Caco-2 (cell line): ENCODE measurements at regions of chr5 and their contacts with region 1.

Region 1: DNA sequence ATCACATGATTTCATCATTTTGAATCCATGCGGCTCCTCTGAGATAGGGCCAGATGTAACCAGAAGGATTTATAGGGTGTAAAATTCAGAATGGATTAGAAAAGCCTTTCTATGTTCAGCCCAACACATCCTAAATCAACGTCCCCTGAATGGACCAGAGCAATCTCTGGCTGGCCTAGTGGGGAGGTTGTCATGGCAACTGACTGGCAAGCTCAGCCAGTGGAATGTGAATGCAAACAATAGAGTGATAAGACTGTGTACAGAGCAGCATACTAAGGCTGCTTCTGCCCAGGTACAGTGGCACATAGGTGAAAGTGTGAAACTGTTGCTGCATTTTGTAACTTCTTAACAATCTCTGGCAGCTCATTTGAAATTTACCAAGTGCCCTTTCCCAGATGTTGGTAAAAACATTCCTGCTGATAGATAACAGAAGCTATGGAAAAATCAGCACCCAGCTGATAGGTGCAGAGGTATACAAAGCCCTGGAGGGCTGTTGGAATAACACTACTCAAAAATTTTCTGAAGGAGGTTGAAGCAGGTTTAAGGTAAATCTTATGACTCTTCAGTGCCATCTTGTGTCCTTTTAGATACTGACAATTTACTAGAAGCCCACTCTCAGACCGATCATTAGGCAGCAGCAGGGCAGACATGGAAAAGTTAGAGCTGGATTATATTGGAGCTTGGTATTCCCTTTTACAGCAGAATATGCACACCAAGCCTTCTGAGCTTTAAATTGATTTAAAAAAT is 267.2 kb downstream of the RAB3C start:
- DNase-seq: peak; percentile 92 to 95
- H3K4me3 ChIP-seq: no peak overlapping the region
- H3K4me3 Mint-ChIP-seq: peak overlapping the region; percentile 13
- H3K27ac Mint-ChIP-seq: peak overlapping the region; percentile 43
- H3K4me1 ChIP-seq: peaks cover 21% of the 10 kb centered on the region
- H3K4me1 Mint-ChIP-seq: no peaks in the 10 kb centered on the region
- H3K27me3 ChIP-seq: no peaks in the 10 kb centered on the region
- H3K27me3 Mint-ChIP-seq: no peaks in the 10 kb centered on the region
- CTCF ChIP-seq: peak; percentile 47 to 72

Region 2: DNA sequence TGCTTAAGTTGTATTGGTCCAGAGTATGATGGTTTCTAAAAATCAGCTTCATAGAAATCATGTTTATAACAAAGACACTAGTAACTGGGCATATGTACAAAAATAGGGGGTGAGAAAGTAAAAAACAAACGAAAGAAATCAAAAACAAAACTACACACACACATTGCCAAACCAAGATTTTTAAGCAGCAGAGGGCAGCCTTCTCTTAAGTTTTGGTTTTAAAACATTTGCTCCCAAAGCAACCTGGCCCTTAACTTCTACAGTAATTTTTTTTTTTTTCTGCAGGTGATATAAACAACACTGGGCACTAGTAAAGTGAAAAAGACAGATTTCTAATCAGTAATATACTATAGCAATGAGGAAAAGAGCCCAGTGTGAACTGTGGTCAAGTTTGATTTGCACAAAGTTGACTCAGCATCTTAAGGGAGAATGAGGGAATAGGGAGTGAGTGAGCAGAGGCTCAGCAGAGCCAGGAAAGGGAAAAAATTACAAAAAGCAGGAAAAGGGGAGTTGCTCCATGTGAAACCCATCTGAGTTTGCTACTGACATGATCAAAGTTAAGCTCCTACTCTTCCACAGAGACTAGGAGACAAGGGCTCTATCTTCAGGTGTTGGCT is 372.2 kb before region 1 on chr5:
- CTCF ChIA-PET with region 1: interaction called, 7 read pairs
- POLR2A ChIA-PET with region 1: no interaction called
- intact Hi-C with region 1: loop called (anchors 1 kb)
- DNase-seq: peak in 1 of 2 experiments; percentile 24
- H3K4me3 ChIP-seq: no peak overlapping the region
- H3K4me3 Mint-ChIP-seq: no peak overlapping the region
- H3K27ac Mint-ChIP-seq: no peak overlapping the region
- H3K4me1 ChIP-seq: no peaks in the 10 kb centered on the region
- H3K4me1 Mint-ChIP-seq: no peaks in the 10 kb centered on the region
- H3K27me3 ChIP-seq: no peaks in the 10 kb centered on the region
- H3K27me3 Mint-ChIP-seq: no peaks in the 10 kb centered on the region
- CTCF ChIP-seq: peak; percentile 18 to 32

Region 3: DNA sequence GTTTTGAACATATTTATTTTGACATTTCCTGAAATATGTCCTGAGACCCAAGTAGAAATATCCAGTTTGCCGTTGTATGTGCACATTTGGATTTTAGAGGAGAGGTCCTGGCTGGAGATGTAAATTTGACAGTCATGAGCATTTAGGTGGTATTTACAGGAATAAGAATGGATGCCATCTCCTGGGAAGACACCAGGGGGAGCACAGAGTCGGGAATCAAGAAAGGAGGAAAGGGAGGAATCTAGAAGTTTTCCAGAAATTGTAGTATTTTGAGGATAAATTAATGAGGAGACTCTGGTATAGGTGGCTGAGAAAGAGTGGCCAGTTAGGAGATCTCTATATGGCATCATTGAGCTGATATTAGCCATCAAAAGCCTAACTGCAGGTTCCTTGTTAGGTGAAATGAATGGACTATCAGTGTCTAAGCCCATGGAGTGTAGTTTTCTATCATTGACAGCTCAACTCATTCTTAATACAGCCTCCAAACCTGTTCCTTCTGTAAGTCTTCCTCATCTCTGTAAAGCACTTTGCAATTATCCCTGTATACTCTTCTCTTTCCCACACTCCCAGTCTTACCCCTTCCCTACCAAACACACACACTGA is 351.7 kb before region 1 on chr5:
- CTCF ChIA-PET with region 1: interaction called, 24 read pairs
- POLR2A ChIA-PET with region 1: no interaction called
- intact Hi-C with region 1: loop called (anchors 1 kb)
- DNase-seq: peak in 1 of 2 experiments; percentile 64
- H3K4me3 ChIP-seq: no peak overlapping the region
- H3K4me3 Mint-ChIP-seq: no peak overlapping the region
- H3K27ac Mint-ChIP-seq: no peak overlapping the region
- H3K4me1 ChIP-seq: peaks cover 20% of the 10 kb centered on the region
- H3K4me1 Mint-ChIP-seq: peaks cover 36% of the 10 kb centered on the region
- H3K27me3 ChIP-seq: no peaks in the 10 kb centered on the region
- H3K27me3 Mint-ChIP-seq: no peaks in the 10 kb centered on the region
- CTCF ChIP-seq: peak; percentile 76 to 80

Region 4: GRCh38 chr5:58582803-58583491 is 267.1 kb before region 1 on chr5 and contains the start of gene RAB3C:
- CTCF ChIA-PET with region 1: interaction called, 3 read pairs
- POLR2A ChIA-PET with region 1: no interaction called
- intact Hi-C with region 1: loop called (anchors 1 kb)
- DNase-seq: peak; percentile 93 to 94
- H3K4me3 ChIP-seq: peak within 1 kb of the TSS; percentile 51
- H3K4me3 Mint-ChIP-seq: peak within 1 kb of the TSS; percentile 94
- H3K27ac Mint-ChIP-seq: no peak within 1 kb of the TSS
- H3K4me1 ChIP-seq: no peaks in the 10 kb centered on the region
- H3K4me1 Mint-ChIP-seq: peaks cover 6% of the 10 kb centered on the region
- H3K27me3 ChIP-seq: no peaks in the 10 kb centered on the region; the same call in 1 of the 2 replicates
- H3K27me3 Mint-ChIP-seq: peaks cover 6% of the 10 kb centered on the region
- CTCF ChIP-seq: no peak
- total RNA-seq, gene RAB3C: 0.05 TPM in 1 of 2 replicates, not detected in the other

Region 5: DNA sequence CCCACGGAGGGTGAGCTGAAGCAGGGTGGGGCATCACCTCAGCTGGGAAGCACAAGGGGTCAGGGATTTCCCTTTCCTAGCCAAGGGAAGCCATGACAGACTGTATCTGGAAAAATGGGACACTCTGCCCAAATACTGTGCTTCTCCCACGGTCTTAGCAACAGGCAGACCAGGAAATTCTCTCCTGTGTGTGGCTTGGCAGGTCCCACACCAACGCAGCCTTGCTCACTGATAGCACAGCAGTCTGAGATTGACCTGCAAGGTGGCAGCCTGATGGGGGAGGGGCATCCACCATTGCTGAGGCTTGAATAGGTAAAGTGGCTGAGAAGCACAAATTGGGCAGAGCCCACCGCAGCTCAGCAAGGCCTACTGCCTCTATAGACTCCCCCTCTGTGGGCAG is 244.0 kb before region 1 on chr5:
- CTCF ChIA-PET with region 1: no interaction called
- POLR2A ChIA-PET with region 1: no interaction called
- intact Hi-C with region 1: no loop called
- DNase-seq: no peak
- H3K4me3 ChIP-seq: no peak overlapping the region
- H3K4me3 Mint-ChIP-seq: no peak overlapping the region
- H3K27ac Mint-ChIP-seq: no peak overlapping the region
- H3K4me1 ChIP-seq: no peaks in the 10 kb centered on the region
- H3K4me1 Mint-ChIP-seq: peaks cover 10% of the 10 kb centered on the region
- H3K27me3 ChIP-seq: no peaks in the 10 kb centered on the region
- H3K27me3 Mint-ChIP-seq: peaks cover 3% of the 10 kb centered on the region
- CTCF ChIP-seq: no peak

Region 6: DNA sequence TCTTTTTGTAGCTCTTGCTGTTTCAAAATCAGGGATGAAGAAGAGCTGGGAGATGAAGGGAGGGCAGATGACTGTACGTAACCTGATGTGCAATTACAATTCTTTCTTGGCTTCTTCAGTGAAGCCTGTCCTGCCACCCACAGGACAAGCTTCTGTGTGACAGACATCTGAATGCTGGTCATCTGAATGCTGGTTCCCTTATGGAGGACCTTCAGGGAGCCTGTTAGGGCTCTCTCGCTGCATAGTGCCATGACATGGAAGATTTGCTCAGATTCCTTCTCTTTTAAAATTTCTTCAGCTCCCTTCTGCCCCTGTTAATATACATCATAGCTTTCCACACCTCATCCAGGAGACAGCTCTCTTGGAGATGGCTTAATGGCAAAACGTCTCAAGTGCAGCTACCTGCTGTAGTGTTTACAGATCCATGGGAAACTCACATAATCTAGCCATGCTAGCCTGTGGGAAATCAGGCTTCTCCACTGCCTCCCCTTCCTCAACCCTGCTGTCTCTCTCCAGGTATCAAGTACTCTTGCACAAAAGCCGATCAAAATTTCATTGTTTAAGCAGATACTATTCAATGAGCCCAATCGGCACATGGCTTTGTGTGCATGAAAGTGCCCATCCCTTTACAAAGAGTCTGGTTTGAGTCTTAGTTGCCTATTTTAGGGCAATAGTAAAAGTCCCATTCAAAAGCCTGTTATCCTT is 132.6 kb before region 1 on chr5:
- CTCF ChIA-PET with region 1: no interaction called
- POLR2A ChIA-PET with region 1: no interaction called
- intact Hi-C with region 1: loop called (anchors 2 kb)
- DNase-seq: peak in 1 of 2 experiments; percentile 17
- H3K4me3 ChIP-seq: no peak overlapping the region
- H3K4me3 Mint-ChIP-seq: no peak overlapping the region
- H3K27ac Mint-ChIP-seq: no peak overlapping the region
- H3K4me1 ChIP-seq: no peaks in the 10 kb centered on the region
- H3K4me1 Mint-ChIP-seq: no peaks in the 10 kb centered on the region
- H3K27me3 ChIP-seq: no peaks in the 10 kb centered on the region
- H3K27me3 Mint-ChIP-seq: peaks cover 13% of the 10 kb centered on the region
- CTCF ChIP-seq: no peak

Region 7: GRCh38 chr5:58810086-58810485 is 40.0 kb before region 1 on chr5:
- CTCF ChIA-PET with region 1: no interaction called
- POLR2A ChIA-PET with region 1: no interaction called
- intact Hi-C with region 1: loop called (anchors 1 kb)
- DNase-seq: no peak
- H3K4me3 ChIP-seq: no peak overlapping the region
- H3K4me3 Mint-ChIP-seq: no peak overlapping the region
- H3K27ac Mint-ChIP-seq: no peak overlapping the region
- H3K4me1 ChIP-seq: no peaks in the 10 kb centered on the region
- H3K4me1 Mint-ChIP-seq: no peaks in the 10 kb centered on the region
- H3K27me3 ChIP-seq: no peaks in the 10 kb centered on the region
- H3K27me3 Mint-ChIP-seq: peaks cover 6% of the 10 kb centered on the region
- CTCF ChIP-seq: no peak

Region 8: DNA sequence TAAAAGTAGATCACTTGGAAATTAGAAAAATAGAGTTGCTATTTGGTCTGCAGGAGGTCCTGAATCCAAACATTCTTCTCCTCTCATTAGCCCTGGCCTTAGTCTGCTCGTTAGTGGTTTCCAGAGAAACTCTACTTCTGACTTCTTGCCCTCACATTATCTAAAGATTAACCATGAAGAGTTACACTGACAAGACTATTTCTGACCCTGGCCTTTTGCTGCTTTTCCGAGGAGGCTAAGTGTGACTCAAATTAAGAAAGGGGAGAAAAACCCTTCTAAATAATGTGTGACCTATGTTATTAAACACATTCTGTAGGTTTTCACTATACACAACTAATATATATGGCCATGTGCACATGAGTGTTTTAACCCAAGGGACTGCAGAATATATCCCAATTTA is 35.2 kb after region 1 on chr5:
- CTCF ChIA-PET with region 1: no interaction called
- POLR2A ChIA-PET with region 1: no interaction called
- intact Hi-C with region 1: no loop called
- DNase-seq: no peak
- H3K4me3 ChIP-seq: no peak overlapping the region
- H3K4me3 Mint-ChIP-seq: no peak overlapping the region
- H3K27ac Mint-ChIP-seq: no peak overlapping the region
- H3K4me1 ChIP-seq: 0 out of 2 replicates have a peak, but pooled peaks cover 3% of the 10 kb centered on the region
- H3K4me1 Mint-ChIP-seq: peaks cover 6% of the 10 kb centered on the region
- H3K27me3 ChIP-seq: no peaks in the 10 kb centered on the region; the same call in 1 of the 2 replicates
- H3K27me3 Mint-ChIP-seq: peaks cover 3% of the 10 kb centered on the region
- CTCF ChIP-seq: no peak